Activated CD4-positive, alpha-beta T cell treated with anti-CD3 and anti-CD28 coated beads for 36 hours (primary cell): ENCODE measurements at regions of chr18 and their contacts with region 1.

Region 1: DNA sequence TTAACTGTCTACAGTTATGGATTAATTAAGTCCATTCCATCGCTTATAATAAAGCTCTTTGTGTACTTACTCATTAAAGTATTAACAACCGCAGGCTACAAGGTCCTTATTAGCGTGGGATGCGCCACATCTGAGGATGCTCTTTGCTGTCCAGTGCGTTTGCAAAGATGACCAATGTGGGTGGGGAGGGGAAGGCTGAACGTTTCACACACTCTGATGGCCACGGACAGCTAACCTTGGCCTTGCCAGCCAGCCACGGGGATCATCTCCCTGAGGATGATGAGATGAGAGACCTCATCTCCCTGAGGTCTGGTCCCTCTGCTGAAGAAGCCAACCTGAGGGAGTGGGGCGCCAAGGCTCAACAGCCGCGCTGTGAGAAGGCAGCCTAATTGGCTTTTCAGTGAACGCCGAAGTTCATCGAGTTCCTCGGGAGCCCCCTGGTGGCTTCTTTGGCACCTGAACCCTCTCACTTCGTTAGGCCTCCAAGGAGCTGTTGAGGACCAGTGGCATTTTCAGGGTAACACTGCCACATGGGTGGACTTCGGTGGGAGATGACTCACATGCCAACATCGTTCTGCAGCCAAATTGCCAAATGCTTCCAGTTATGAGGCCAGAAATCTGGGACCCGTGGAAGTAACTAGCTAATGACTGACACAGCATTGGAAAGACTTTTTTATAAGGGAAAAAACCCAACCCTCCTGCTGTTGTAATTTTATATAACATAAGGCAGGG is 69.3 kb upstream of the SEC11C start:
- DNase-seq: peak; percentile 91
- ATAC-seq: peak; percentile 93
- H3K4me3 Mint-ChIP-seq: no peak overlapping the region
- H3K27ac Mint-ChIP-seq: no peak overlapping the region
- H3K4me1 Mint-ChIP-seq: peaks cover 4% of the 10 kb centered on the region
- H3K27me3 Mint-ChIP-seq: no peaks in the 10 kb centered on the region

Region 2: DNA sequence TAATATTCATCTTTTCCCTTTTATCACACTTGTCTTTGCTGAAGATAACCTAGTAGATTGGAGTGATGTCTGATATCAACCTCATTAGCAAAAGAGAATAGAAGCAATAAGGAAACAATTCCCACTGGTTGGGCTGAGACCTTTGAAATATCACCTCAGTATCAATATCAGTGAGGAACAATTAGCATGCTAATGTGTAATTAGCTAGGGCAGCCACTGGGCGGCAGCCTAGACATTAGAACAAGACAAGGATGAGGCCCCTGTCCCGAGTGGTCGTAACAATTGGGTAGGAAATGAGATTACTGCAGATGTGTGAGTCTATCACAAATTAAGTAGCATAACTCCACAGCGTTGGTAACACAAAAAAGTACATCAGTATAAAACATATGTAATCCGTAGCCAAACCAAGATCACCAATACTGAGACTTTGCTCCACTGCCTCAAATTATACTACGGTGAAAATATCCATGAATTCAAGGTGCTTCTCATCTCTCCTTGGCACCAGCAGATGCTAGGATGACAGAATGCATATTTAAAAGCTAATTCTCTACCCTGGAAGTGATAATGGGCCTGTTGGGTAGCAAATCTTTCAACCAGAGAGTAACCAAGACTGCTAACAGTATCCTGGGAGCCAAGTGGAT is 540.5 kb before region 1 on chr18:
- CTCF ChIA-PET with region 1: no interaction called
- POLR2A ChIA-PET with region 1: no interaction called
- intact Hi-C with region 1: loop called (anchors 5 to 10 kb)
- DNase-seq: peak; percentile 83
- ATAC-seq: peak; percentile 39
- H3K4me3 Mint-ChIP-seq: no peak overlapping the region
- H3K27ac Mint-ChIP-seq: no peak overlapping the region
- H3K4me1 Mint-ChIP-seq: peaks cover 30% of the 10 kb centered on the region
- H3K27me3 Mint-ChIP-seq: peaks cover 13% of the 10 kb centered on the region

Region 3: DNA sequence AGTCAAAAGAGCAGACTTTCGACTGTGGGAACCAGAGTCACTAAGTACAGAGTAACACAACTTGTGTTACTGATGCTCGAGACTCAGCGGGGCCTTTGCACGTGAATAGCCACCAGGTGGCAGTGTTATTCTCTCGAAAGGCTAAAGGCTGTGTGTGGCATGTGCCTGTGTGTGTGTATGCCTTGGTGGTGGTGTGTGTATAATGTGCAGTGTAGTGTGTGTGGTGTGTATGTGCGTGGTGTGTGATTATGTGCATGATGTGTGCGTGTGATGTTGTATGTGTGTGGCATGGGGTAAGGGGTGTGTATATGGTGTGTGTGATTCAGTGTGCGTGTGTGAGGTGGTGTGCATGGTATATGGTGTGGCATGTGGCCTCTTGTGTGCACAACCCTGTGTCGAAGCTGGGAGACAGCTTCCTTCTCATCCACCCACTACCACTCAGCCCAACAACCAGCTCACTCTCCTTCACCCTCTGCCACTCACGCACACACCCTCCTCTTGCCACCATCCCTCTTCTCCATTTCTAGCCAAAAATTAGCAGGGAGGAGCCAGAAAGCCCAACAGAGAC is 288.6 kb before region 1 on chr18:
- CTCF ChIA-PET with region 1: interaction called, 17 read pairs
- POLR2A ChIA-PET with region 1: no interaction called
- intact Hi-C with region 1: loop called (anchors 1 kb)
- DNase-seq: peak; percentile 82
- ATAC-seq: peak; percentile 94
- H3K4me3 Mint-ChIP-seq: no peak overlapping the region
- H3K27ac Mint-ChIP-seq: no peak overlapping the region
- H3K4me1 Mint-ChIP-seq: no peaks in the 10 kb centered on the region
- H3K27me3 Mint-ChIP-seq: peaks cover 12% of the 10 kb centered on the region

Region 4: GRCh38 chr18:58953627-58954026 is 116.7 kb before region 1 on chr18:
- CTCF ChIA-PET with region 1: no interaction called
- POLR2A ChIA-PET with region 1: no interaction called
- intact Hi-C with region 1: no loop called
- DNase-seq: no peak
- ATAC-seq: no peak
- H3K4me3 Mint-ChIP-seq: no peak overlapping the region
- H3K27ac Mint-ChIP-seq: no peak overlapping the region
- H3K4me1 Mint-ChIP-seq: no peaks in the 10 kb centered on the region
- H3K27me3 Mint-ChIP-seq: no peaks in the 10 kb centered on the region

Region 5: DNA sequence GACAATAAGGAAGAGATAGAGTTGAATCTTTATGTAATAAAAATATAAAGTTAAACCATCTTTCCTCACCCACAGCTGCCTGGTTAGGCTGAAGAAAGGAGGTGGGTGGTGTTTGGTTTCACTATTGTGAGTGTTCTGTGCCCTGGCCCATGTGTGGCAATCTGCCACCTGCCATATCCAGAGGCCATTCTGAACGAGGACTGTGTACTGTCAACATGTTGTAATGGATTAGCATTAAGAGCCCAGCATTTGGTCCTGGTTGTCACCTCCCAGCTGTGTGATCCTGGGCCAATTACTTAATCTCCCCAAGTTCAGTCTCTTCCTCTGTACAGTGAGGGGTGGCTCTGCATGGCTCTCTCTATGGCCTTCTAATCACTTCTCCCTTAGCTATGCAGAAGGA is 48.8 kb before region 1 on chr18:
- CTCF ChIA-PET with region 1: no interaction called
- POLR2A ChIA-PET with region 1: no interaction called
- intact Hi-C with region 1: no loop called
- DNase-seq: no peak
- ATAC-seq: no peak
- H3K4me3 Mint-ChIP-seq: no peak overlapping the region
- H3K27ac Mint-ChIP-seq: no peak overlapping the region
- H3K4me1 Mint-ChIP-seq: peaks cover 4% of the 10 kb centered on the region
- H3K27me3 Mint-ChIP-seq: peaks cover 15% of the 10 kb centered on the region

Region 6: GRCh38 chr18:59056706-59057492 is 13.4 kb before region 1 on chr18:
- CTCF ChIA-PET with region 1: interaction called, 24 read pairs
- POLR2A ChIA-PET with region 1: no interaction called
- intact Hi-C with region 1: no loop called
- DNase-seq: peak; percentile 90
- ATAC-seq: peak; percentile 79
- H3K4me3 Mint-ChIP-seq: no peak overlapping the region
- H3K27ac Mint-ChIP-seq: no peak overlapping the region
- H3K4me1 Mint-ChIP-seq: peaks cover 2% of the 10 kb centered on the region
- H3K27me3 Mint-ChIP-seq: peaks cover 11% of the 10 kb centered on the region